GM10248 (cell line): ENCODE measurements at regions of chr6 and their contacts with region 1.

Region 1: DNA sequence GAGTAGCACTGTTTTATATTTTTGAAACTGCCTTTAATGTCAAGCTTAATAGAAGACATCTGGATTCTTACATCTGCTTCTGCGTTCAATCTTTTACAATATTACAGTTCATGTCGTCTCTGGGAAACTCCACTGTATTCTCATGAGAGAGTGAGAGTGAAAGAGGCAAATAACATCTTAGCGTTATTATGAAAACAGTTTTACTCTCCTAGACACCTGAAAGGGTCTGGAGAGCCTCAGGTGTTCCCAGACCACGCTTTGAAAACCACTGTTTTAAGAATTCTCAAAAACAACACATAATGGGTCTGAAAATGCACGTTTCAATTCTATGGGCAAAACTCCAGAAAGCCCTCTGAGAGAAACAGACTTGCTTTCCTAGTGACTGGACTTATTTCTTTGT is 63.3 kb downstream of the ARHGAP18 start:
- DNase-seq: no peak
- CTCF ChIP-seq: no peak

Region 2: DNA sequence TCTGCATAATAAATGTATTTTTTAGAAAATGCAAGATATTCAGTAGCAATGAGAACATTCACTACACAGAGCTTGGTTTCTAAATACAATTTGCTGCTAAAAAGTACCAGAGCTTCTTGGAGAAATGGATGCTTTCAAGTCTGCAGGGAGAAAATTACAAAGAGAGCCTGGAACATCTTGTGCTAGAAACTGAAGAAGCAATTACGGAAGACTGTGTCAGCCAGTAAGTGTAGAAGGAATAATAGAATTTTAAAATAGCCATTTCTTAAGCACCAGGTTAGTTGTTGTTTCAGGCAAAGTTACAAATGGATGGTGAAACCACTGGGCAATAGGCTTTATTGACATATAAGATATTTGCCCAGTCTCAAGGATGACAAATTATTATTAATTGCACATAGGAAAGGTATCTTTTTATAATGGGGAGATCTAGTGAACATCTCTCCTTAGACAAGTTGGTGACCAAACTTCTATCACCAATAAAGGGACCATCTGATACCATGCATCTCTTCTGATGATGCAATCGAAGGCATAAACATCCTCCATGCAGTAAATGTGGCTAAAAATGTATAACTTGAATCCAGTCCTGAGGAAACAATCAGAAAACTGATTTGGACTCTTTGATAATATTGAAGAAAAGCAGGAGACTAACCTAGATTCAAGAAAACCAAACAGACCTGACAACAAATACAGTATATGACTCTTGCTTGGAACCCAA is 18.4 kb before region 1 on chr6:
- CTCF ChIA-PET with region 1: interaction called, 11 read pairs
- POLR2A ChIA-PET with region 1: no interaction called
- DNase-seq: no peak
- CTCF ChIP-seq: no peak

Region 3: DNA sequence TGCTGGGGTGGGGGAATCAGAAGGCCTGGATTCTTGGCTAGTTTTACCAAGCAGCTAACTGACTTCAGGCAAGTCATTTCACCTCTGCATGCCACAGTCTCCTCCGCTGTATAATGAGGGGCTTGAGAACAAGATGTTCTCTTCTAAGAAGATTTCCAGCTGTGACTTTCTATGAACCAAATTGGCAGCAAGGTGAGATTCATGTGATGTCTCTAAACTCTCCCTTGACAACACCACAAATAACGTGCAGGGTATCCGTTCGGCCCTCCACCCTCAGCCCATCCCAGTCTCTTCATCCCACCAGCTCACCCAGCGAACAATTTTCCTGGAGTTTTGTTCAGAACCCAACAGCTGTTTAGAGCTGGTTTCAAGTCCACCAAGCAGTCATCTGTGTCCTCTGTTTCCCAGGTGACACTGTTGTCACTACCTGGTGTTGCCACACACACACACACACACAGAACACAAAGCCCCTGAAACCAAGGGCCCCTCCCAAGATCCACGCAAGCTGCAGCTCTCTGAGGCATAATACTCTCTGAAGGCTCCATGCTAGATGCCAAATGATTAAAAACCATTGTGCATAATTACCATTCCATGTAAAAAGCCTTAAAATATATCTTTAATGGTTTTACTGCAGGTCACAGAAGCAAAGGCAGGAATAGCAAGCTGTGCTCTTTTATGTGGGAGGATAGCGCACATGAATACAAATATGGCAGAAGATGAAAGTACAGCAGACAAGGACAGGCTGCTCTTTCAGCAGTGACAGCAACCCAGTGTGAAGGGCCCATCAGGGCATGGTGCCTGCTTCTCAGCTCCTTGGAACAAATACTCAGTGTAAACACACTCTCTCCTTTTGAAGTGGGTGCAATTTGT is 15.1 kb after region 1 on chr6:
- CTCF ChIA-PET with region 1: interaction called, 24 read pairs
- POLR2A ChIA-PET with region 1: no interaction called
- DNase-seq: no peak
- CTCF ChIP-seq: no peak